ENCODE measurements at regions of chr4 and their contacts with region 1.

Region 1: DNA sequence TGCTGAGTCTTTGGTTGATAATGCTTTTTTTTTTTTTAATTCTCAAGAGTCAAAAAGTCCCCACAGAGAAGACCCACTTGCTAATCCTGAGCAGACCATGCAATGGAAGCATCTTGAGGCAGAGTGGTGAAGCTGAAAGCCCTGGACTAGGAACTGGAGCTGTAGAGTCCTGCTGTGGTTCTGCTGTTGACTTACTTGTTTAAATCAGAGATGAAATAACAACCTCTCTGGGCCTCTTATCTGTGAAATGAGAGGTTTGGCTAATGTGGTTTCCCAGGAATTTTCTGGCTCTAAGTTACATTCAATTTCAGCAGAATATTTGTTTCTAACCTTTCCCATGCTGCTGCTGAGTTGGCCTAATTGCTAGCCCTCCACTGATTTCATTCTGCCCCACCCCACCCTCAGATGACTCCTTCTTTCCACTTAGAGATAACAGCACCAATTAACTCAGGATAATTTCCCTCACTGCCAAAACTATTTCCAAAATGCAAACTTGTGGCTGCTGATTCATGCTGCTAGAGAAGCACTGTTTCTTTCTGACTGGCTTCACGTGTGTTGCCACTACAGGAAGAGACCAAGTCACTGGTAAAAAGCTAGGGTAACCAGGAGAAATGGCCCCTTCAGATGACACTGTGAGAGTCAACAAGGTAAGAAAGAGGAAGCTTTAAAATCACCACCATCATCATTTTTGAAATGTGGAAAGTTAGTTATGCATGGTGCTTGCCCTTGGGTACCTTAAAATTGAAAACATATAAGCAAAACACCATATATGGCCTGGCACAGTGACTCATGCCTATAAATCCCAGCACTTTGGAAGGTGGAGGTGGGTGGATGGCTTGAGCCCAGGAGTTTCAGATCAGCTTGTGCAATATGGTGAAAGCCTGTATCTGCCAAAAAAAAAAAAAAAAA is 326.4 kb downstream of the DCHS2 start:
- DNase-seq: peak; percentile 66
- H3K4me3 Mint-ChIP-seq: no peak overlapping the region
- H3K27ac Mint-ChIP-seq: peak overlapping the region; percentile 48
- H3K4me1 Mint-ChIP-seq: peaks cover 15% of the 10 kb centered on the region
- H3K27me3 Mint-ChIP-seq: peaks cover 13% of the 10 kb centered on the region

Region 2: GRCh38 chr4:153649572-153649991 is 515.6 kb before region 1 on chr4:
- CTCF ChIA-PET with region 1: no interaction called
- intact Hi-C with region 1: loop called (anchors 1 kb)
- DNase-seq: peak; percentile 44
- H3K4me3 Mint-ChIP-seq: no peak overlapping the region
- H3K27ac Mint-ChIP-seq: no peak overlapping the region
- H3K4me1 Mint-ChIP-seq: peaks cover 32% of the 10 kb centered on the region
- H3K27me3 Mint-ChIP-seq: no peaks in the 10 kb centered on the region

Region 3: GRCh38 chr4:153809307-153809706 is 355.9 kb before region 1 on chr4:
- CTCF ChIA-PET with region 1: no interaction called
- intact Hi-C with region 1: loop called (anchors 1 kb)
- DNase-seq: peak; percentile 59
- H3K4me3 Mint-ChIP-seq: no peak overlapping the region
- H3K27ac Mint-ChIP-seq: no peak overlapping the region
- H3K4me1 Mint-ChIP-seq: peaks cover 17% of the 10 kb centered on the region
- H3K27me3 Mint-ChIP-seq: no peaks in the 10 kb centered on the region

Region 4: DNA sequence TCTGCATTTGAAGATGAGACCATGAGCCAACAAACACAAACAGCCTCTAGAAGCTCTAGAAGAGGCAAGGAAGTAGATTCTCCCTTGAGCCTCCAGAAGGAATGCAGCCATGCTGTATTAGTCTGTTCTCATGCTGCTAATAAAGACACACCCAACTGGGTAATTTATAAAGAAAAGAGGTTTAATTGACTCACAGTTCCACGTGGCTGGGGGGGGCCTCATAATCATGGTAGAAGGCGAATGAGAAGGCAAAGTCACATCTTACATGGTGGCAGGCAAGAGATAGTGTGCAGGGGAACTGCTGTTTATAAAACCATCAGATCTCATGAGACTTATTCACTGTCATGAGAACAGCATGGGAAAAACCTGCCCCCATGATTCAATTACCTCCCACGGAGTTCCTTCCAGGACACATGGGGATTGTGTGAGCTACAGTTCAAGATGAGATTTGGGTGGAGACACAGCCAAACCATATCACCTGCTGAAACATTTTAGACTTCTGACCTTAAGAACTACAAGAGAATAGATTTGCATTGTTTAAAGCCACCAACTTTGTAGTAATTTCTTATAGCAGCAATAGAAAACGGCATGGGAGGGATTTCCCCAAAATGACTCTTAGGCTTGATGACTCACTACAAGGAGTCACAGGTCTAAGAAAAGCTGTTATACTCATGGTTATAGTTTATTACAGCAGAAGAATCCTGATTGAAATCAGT is 91.9 kb before region 1 on chr4:
- CTCF ChIA-PET with region 1: no interaction called
- intact Hi-C with region 1: loop called (anchors 1 kb)
- DNase-seq: peak; percentile 37
- H3K4me3 Mint-ChIP-seq: no peak overlapping the region
- H3K27ac Mint-ChIP-seq: peak overlapping the region; percentile 46
- H3K4me1 Mint-ChIP-seq: peaks cover 8% of the 10 kb centered on the region
- H3K27me3 Mint-ChIP-seq: peaks cover 21% of the 10 kb centered on the region

Region 5: GRCh38 chr4:154491341-154492271 is 326.4 kb after region 1 on chr4 and contains the start of gene DCHS2:
- CTCF ChIA-PET with region 1: no interaction called
- intact Hi-C with region 1: loop called (anchors 5 kb)
- DNase-seq: peak; percentile 45
- H3K4me3 Mint-ChIP-seq: peak within 1 kb of the TSS; percentile 66
- H3K27ac Mint-ChIP-seq: no peak within 1 kb of the TSS
- H3K4me1 Mint-ChIP-seq: peaks cover 16% of the 10 kb centered on the region
- H3K27me3 Mint-ChIP-seq: peaks cover 66% of the 10 kb centered on the region
- total RNA-seq, gene DCHS2: not detected

Measured in activated naive CD4-positive, alpha-beta T cell treated with anti-CD3 and anti-CD28 coated beads for 36 hours (primary cell).